ENCODE measurements at regions of chr6 and their contacts with region 1.

Region 1: DNA sequence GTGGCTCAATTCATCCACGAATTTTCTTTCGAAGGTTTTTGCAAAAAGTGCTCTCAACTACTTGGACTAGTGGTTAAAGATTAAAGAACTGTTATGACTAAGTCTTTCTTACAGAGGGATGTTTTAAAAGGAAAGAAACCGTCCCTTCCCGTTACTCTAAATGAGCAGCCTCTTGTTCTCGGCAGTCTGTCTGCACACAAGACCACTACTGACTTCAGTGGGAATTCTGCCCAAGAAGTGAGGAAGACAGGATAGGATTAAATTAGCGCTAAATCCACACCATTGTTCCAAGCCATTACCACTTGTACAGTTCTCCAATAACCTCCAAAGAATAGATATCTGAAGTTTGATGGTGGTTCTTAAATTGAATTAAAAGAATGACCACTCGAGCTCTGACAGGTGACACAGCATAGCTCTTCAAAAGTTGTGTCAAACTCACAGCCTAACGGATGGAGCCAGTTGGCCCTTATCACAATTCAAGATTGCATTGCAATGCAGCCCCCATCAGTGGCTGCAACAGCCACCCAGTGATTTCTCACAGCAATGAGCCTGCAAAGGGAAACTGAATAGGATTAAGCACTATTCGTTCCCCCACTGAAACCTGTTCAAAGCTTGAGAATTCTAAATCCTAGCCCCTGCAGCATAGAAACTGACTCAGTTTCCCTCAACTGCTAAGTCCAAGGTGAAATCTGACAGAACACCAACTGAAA is 1.8 kb downstream of the EPB41L2 start:
- DNase-seq: no peak
- H3K4me3 ChIP-seq: peak overlapping the region; percentile 74 to 96
- H3K27ac ChIP-seq: peak overlapping the region; percentile 78 to 85
- H3K4me1 ChIP-seq: peaks cover 0 to 31% (median 6%) of the 10 kb centered on the region in 4 donors
- H3K27me3 ChIP-seq: no peaks in the 10 kb centered on the region
- CTCF ChIP-seq: no peak

Region 2: GRCh38 chr6:131022691-131023090 is 38.5 kb before region 1 on chr6:
- intact Hi-C with region 1: loop called (anchors 1 kb)
- DNase-seq: no peak
- H3K4me3 ChIP-seq: no peak overlapping the region
- H3K27ac ChIP-seq: no peak overlapping the region
- H3K4me1 ChIP-seq: no peaks in the 10 kb centered on the region
- H3K27me3 ChIP-seq: no peaks in the 10 kb centered on the region
- CTCF ChIP-seq: no peak

Region 3: DNA sequence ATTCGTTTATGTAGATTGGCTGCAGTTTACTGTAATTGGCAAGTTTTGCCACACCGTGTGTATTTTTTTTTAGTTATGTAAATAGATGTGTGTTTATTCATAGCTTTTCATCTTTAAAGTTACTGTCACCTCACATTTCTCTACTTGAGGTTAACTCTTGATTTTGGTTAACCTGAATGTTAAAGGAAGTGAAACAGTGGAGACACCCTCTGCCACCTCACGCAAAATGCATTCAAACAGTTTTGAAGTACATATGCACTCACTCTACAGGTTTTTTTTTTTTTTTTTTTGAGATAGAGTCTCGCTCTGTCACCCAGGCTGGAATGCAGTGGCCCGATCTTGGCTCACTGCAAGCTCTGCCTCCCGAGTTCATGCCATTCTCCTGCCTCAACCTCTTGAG is 622.3 kb after region 1 on chr6:
- intact Hi-C with region 1: no loop called
- DNase-seq: no peak
- H3K4me3 ChIP-seq: no peak overlapping the region
- H3K27ac ChIP-seq: no peak overlapping the region
- H3K4me1 ChIP-seq: no peaks in the 10 kb centered on the region
- H3K27me3 ChIP-seq: no peaks in the 10 kb centered on the region
- CTCF ChIP-seq: no peak

Measured in tibial artery (tissue), 4 donors.